Sigmoid colon (tissue), 7 donors: ENCODE measurements at regions of chr22 and their contacts with region 1.

Region 1: DNA sequence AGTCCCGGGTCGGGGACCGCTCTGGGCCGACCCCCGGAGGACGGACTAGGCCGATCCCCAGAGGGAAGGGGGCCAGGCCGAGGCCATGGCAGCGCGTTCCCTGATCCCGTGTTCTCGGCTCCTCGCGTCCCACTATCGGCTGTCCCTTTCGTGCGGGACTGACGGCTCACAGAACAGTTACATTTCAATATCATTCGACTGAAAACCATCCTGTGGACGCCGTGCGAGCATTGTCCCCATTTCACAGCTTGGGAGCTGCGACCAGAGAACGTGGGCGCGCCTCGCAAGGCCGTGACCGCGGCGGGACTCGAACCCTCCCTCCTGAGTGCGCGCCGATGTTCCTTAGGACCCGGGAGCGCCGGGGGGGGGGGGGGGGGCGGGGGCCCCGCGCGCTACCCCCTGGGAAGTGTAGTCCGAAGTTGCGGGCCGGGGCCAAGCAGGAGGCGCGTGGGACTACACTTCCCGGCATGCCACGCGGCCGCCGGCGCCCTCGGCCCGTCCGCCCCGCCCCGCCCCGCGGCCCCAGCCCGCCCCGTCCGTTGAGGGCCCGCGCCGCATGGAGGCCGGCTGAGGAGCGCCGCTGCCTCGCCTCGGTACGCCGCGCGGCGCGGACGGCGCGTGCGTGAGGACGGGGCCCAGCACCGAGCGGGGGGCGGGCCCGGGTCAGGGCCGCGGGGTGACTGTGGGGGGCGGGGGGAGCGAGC is at the start of gene TRABD:
- DNase-seq: peak; percentile 95
- H3K4me3 ChIP-seq: peak within 1 kb of the TSS; percentile 61 to 90 (median 81)
- H3K27ac ChIP-seq: peak within 1 kb of the TSS; percentile 64 to 77 (median 76)
- H3K4me1 ChIP-seq: peaks cover 0 to 55% (median 50%) of the 10 kb centered on the region in 4 donors
- H3K27me3 ChIP-seq: peaks cover 0 to 2% (median 0%) of the 10 kb centered on the region in 3 donors
- CTCF ChIP-seq: no peak
- EP300 ChIP-seq: no peak
- POLR2A ChIP-seq: no peak
- total RNA-seq, gene TRABD: 14.2 to 21.4 (median 18.2) TPM

Region 2: DNA sequence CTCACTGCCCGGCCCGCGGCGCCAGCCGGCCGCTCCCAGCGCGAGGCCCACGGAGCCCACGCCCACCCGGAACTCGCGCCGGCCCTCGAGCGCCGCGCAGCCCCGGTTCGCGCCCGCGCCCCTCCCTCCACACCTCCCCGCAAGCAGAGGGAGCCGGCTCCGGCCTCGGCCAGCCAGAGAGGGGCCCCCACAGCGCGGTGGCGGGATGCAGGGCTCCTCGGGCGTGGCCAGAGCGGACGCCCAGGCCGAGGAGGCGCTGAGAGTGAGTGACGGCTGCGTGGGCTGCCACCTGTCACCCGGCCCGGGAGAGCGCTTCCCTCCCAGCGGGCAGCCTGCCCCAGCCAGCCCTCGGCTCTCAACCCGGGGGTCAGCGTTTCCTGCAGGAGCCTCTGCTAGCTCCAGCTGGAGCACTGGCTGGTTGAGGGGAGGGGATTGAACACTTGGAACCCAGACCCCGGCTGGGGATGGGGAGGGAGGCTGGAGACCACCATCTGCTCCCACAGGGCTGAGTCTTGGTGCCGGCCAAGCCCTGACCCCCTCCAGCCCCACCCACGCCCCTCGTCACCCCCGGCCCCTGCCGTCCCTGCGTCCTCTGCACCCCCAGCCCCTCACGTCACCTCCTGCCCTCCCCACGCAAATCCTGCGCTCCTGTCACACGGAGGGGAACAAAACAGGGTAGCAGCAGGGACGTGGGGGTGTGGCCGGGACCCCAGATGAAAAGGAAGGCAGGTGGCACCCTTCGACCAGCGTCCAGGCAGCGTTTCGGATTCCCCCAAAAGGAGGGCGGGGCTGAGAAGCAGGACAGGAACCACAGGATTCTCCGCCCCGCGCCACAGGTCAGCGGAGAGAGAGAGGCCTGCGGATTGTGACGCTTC is 514.8 kb before region 1 on chr22:
- intact Hi-C with region 1: no loop called
- DNase-seq: peak; percentile 56
- H3K4me3 ChIP-seq: peak overlapping the region in 3 of 4 donors; percentile 21 to 32 (median 25)
- H3K27ac ChIP-seq: no peak overlapping the region
- H3K4me1 ChIP-seq: peaks cover 0 to 17% (median 10%) of the 10 kb centered on the region in 4 donors
- H3K27me3 ChIP-seq: peaks cover 12 to 85% (median 62%) of the 10 kb centered on the region in 3 donors
- CTCF ChIP-seq: no peak
- EP300 ChIP-seq: no peak
- POLR2A ChIP-seq: no peak

Region 3: GRCh38 chr22:50058906-50059880 is 126.3 kb before region 1 on chr22:
- intact Hi-C with region 1: no loop called
- DNase-seq: no peak
- H3K4me3 ChIP-seq: peak overlapping the region in 2 of 4 donors; percentile 21 to 35
- H3K27ac ChIP-seq: no peak overlapping the region
- H3K4me1 ChIP-seq: peaks cover 0 to 14% (median 11%) of the 10 kb centered on the region in 4 donors
- H3K27me3 ChIP-seq: peaks cover 8 to 45% (median 33%) of the 10 kb centered on the region in 3 donors
- CTCF ChIP-seq: no peak
- EP300 ChIP-seq: no peak
- POLR2A ChIP-seq: no peak

Region 4: DNA sequence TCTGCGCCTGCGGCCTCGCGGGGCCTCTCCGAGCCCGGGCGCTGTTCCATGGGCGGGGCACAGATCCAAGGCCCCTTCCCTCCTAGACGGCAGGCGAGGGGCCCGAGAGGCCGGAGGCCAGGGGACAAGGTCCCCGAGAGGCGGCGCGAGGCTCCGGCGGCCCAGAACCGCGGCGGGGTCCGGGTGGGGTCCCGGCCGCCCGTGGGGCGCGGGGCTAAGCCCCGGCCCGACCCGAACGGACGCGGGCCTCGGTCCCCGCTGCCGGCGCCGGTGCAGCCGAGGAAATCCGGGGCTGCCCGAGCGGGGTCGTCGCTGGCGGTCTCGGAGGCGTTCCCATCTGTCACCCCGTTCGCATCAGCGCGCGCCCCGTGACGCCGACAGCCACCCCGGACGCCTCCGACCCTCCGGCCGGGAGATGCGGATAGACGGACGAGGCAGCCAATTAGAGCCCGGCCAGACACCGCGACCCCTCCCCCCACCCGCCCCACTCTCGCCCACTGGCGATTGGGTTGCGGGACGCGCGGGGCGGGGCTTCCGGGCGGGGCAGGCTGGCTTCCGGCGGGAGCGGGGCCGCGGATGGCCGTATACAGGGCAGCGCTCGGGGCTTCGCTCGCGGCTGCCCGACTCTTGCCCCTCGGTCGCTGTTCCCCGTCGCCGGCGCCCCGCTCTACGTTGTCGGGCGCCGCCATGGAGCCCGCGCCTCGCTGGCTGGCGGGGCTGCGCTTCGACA is 15.1 kb after region 1 on chr22 and contains the start of gene SELENOO:
- intact Hi-C with region 1: loop called (anchors 2 kb)
- DNase-seq: peak; percentile 95
- H3K4me3 ChIP-seq: peak within 1 kb of the TSS; percentile 42 to 89 (median 84)
- H3K27ac ChIP-seq: peak within 1 kb of the TSS; percentile 79 to 89 (median 86)
- H3K4me1 ChIP-seq: peaks cover 0 to 32% (median 24%) of the 10 kb centered on the region in 4 donors
- H3K27me3 ChIP-seq: no peaks in the 10 kb centered on the region
- CTCF ChIP-seq: no peak
- EP300 ChIP-seq: no peak
- POLR2A ChIP-seq: peak; percentile 24 to 52
- total RNA-seq, gene SELENOO: 17.5 to 30.2 (median 22.3) TPM

Region 5: DNA sequence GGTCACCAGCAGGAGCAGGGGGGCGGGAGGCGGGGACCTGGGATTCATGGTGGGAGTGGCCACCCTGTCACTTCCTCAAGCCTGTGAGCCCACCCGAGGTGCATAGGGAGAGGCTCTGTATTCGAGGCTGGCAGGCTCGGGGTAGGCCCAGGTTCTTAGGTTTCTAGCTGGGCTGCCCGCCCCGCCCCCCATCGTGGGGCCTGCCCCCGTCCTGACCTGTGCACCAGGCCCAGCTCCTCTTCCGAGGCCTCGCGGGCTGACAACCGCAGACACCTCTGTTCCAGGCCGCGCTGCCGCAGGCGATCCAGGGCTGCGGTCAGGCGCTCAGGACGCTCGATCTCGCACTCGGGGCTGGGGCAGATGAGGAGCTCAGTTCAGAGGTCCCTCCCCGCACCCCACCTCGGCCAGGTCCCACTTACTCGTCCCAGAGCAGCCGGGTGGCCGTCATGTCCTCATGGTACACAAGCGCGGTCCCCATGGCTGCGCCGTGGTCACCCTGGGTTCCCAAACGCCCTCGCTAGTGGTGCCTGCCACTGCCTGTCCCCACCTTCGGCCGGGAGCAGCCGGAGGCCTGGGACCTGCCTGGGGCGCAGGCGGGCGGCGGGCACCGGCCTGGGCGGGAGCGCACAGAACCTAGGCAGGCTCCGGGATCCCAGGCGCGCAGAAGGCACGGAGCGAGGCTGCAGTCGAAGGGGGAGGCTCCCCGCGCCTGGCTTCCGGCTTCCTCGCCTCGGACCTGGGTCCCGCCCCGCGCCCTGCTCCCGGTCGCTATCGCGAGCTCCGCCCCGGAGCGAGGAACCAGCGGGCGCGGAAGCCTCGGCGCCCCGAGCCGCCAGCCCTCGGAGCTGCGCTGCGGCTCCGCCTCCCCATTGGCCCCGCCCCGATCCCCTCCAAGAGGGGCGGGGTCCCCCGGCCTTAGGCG is 65.3 kb after region 1 on chr22 and contains the start of gene HDAC10:
- intact Hi-C with region 1: no loop called
- DNase-seq: peak; percentile 88
- H3K4me3 ChIP-seq: peak within 1 kb of the TSS; percentile 47 to 82 (median 68)
- H3K27ac ChIP-seq: peak within 1 kb of the TSS; percentile 75 to 82 (median 81)
- H3K4me1 ChIP-seq: peaks cover 0 to 48% (median 32%) of the 10 kb centered on the region in 4 donors
- H3K27me3 ChIP-seq: no peaks in the 10 kb centered on the region
- CTCF ChIP-seq: no peak
- EP300 ChIP-seq: no peak
- POLR2A ChIP-seq: no peak
- total RNA-seq, gene HDAC10: 7.2 to 47.4 (median 14.9) TPM

Region 6: DNA sequence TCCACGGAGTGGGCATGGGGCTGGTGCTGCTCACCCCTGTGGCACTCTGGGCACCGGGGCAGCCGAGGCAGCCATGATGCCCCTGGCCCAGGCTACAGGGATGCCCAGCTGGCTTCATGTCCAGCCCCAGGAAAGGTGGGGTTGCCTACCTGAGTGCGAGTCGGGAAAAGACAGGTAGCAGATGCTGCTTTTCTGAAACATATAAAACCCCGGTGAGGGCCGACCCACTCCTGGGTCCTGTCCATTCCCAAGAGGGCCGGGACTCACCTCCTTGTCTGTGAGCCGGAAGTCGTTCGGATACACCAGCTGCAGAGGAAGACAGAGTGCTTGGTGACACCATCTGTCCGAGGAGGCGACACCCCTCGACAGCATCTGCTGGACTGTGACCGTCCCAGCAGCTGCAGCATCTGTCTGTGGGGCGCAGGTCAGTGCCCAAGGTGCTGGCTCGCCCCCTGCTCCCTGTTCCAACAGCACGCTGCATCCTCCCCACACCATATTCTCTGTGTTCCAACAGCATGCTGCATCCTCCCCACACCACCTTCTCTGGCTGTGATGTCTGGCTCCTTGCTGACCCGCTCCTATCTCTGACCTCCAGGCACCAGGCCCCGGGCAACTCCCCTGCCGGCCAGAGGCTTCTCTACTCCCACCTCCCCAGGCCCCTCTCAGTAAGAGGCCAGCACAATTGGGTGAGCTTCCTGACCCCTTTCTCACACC is 133.3 kb after region 1 on chr22:
- intact Hi-C with region 1: no loop called
- DNase-seq: no peak
- H3K4me3 ChIP-seq: no peak overlapping the region
- H3K27ac ChIP-seq: no peak overlapping the region
- H3K4me1 ChIP-seq: no peaks in the 10 kb centered on the region
- H3K27me3 ChIP-seq: no peaks in the 10 kb centered on the region
- CTCF ChIP-seq: no peak
- EP300 ChIP-seq: no peak
- POLR2A ChIP-seq: no peak